ENCODE measurements at regions of chr6 and their contacts with region 1.

Region 1: DNA sequence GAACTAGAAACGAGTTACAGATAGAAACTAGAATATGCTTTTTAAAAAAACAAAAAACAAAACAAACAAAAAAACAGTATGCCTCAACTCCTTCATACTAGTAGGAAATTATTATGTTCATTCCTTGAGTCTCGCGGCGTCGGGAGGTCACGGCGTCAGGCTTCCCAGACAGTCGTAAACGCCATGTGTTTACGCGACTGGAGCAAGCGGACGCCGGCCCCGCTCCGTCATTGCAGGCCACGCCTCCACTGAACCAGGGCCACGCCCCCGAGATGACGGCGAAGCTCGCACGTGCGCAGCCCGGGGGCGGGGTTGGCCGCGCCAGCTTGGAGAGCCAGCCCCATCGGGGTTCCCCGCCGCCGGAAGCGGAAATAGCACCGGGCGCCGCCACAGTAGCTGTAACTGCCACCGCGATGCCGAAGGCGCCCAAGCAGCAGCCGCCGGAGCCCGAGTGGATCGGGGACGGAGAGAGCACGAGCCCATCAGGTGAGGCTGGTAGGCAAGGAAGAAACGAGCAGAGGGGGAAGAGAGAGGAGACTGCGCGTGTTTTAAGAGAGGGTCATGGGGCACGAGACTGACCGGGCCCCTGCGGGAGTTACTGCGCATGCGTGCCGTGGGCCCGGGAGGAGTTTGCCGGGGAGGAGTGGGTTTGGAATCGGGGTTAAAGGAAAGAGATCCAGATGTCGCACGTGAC is at the start of gene ABCF1:
- DNase-seq: peak; percentile 98 to 100 (median 99)

Region 2: GRCh38 chr6:29884261-29884660 is 687.0 kb before region 1 on chr6:
- intact Hi-C with region 1: no loop called
- DNase-seq: no peak

Region 3: DNA sequence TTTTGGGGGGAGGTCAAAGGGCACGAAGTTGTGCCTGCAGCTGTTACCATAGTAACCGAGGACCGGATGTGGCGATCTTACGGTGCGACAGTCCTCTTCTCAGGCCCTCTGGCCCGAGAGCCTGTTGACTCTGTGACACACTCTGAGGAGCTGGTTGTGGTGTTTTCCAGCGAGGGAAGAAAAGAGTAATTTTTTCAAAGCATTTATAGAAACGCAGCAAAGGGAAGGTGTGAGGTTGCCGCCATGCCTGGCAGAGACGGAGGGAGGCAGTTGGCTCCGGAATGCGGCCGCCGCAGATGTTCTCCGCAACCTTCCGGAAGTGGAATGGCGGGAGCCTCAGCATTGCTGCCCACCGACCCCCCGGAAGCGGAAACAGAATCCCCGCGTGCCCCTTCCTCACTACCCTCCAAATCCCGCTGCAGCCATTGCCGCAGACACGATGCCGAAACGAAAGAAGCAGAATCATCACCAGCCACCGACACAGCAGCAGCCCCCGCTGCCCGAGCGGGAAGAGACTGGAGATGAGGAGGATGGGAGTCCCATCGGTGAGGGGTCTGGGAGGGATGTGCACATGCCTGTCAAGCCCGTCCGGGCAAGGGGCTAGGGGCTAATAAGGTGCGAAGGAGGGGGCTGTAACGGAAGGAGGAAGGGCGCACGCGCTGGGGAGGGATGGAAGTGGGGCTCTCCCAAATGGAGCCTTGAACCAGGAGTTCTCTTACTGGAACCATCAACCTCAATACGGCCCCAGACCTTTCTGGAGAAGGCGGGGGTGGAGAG is 14.1 kb before region 1 on chr6 and contains the start of gene PRR3:
- intact Hi-C with region 1: loop called (anchors 1 kb)
- DNase-seq: peak; percentile 91 to 99 (median 96)

Region 4: GRCh38 chr6:30614843-30615218 is 43.6 kb after region 1 on chr6:
- intact Hi-C with region 1: loop called (anchors 5 kb)
- DNase-seq: peak; percentile 65 to 96 (median 81)